ENCODE measurements at regions of chr18 and their contacts with region 1.

Region 1: DNA sequence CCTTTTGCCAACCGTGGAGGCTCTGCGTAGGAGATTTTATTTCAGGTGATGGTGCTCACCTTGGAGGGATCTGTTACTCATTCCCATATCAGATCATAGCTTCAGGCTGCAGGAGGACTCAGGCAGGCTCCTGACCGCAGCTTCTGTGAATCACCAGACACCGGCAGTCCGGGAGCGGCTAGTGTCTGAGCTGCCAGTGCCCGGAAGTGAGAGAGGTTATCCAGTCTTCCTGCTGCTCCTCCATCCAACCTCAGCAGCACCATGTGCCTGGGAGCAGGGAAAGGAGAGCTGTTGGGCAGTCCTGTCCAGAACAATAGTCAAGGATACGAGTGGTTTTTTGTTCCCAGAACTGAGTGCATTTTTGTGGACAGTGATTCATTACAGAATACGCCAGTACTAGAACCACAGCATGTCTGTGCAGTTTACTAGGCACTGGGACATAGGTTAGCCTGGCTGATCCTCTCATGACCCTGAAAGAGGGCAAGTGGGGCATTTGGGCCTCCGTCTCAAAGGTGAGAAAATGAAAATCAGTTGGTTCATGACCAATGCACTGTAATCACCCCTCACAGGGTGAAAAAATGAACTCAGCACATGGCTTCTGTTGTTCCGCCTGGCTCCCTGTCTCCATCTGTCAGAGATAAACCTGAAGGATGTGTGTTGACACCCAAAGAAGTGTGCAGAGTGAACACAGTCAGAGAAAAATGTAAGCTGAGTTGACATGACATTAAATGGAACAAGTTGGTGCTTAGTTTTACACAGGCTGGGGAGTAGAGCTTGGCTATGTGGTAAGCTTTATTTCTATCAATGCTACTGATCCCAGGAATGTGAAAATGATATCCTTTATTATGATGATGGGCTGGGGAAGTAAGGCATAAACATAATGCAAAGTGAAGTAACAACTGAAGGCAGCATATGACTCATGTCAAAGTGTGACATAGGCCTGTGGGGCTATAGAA is 12.2 kb downstream of the FHOD3 start:
- DNase-seq: peak; percentile 92 to 96
- H3K4me3 ChIP-seq: peak overlapping the region; percentile 41; the same call in 1 of the 2 replicates
- H3K27ac ChIP-seq: peak overlapping the region; percentile 98
- H3K4me1 ChIP-seq: peaks cover 81% of the 10 kb centered on the region
- H3K27me3 ChIP-seq: no peaks in the 10 kb centered on the region
- CTCF ChIP-seq: no peak

Region 2: GRCh38 chr18:36352384-36352783 is 42.7 kb after region 1 on chr18:
- CTCF ChIA-PET with region 1: no interaction called
- POLR2A ChIA-PET with region 1: no interaction called
- intact Hi-C with region 1: loop called (anchors 10 kb)
- DNase-seq: peak in 1 of 2 experiments; percentile 11
- H3K4me3 ChIP-seq: no peak overlapping the region
- H3K27ac ChIP-seq: no peak overlapping the region
- H3K4me1 ChIP-seq: no peaks in the 10 kb centered on the region
- H3K27me3 ChIP-seq: no peaks in the 10 kb centered on the region
- CTCF ChIP-seq: no peak

Region 3: DNA sequence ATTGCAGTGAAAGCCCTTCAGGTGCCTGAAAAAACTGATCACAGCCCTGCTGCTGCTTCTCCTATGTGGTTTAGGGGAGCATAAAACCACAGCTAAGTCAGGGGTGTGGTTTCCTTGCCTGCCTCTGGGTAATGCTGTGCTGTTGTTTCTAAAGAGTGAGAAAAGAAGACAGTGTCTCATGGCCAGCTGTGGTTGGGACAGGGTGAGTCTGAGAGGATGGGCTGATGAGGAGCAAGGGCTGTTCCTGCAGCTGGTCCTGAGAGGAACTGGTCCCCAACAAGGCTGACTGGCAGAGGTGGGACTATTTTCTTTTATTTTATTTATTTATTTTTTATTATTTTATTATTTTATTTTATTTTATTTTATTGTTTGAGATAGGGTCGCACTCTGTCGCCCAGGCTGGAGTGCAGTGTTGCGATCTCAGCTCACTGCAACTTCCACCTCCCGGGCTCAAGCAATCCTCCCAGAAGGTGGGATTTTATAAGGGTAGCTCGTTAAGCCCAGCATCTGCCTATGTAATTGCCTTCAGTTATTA is 224.5 kb after region 1 on chr18:
- CTCF ChIA-PET with region 1: no interaction called
- POLR2A ChIA-PET with region 1: no interaction called
- intact Hi-C with region 1: loop called (anchors 1 kb)
- DNase-seq: no peak
- H3K4me3 ChIP-seq: no peak overlapping the region
- H3K27ac ChIP-seq: no peak overlapping the region
- H3K4me1 ChIP-seq: 0 out of 2 replicates have a peak, but pooled peaks cover 5% of the 10 kb centered on the region
- H3K27me3 ChIP-seq: no peaks in the 10 kb centered on the region
- CTCF ChIP-seq: no peak